Left ventricle myocardium superior (tissue), 1 donor: ENCODE measurements at regions of chr6 and their contacts with region 1.

Region 1: DNA sequence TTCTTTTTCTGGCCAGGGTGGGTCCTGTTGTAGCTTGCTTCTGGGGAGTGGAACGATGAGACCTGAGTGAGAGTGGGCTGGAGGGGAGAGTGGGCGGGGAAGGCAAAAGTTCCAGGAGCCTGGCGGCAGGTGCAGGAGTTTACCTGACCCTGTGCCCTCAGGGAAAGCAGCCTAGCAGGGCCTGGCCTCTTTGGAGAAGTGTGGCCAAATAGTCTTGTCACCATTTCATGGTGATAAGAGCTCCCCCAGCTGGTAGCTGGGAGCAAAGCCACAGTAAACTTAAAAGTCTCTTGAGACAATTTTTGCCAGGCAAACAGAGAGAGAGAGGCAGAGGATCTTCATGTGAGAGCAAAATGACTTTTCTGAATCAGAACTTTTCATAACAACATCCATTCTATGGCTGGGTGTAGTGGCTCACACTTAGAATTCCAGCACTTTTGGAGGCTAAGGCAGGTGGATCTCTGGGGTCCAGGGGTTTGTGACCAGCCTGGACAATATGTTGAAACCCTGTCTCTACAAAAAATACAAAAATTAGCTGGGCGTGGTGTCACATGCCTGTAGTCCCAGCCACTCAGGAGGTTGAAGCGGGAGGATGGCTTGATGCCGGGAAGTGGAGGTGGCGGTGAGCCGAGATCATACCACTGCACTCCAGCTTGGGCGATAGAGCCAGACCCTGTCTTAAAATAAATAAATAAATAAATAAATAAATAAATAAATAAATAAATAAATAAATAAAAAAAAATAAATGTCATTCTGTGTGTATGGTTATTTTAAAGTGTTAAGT is 161.8 kb upstream of the SCGN start:
- DNase-seq: peak; percentile 65
- ATAC-seq: peak; percentile 84

Region 2: DNA sequence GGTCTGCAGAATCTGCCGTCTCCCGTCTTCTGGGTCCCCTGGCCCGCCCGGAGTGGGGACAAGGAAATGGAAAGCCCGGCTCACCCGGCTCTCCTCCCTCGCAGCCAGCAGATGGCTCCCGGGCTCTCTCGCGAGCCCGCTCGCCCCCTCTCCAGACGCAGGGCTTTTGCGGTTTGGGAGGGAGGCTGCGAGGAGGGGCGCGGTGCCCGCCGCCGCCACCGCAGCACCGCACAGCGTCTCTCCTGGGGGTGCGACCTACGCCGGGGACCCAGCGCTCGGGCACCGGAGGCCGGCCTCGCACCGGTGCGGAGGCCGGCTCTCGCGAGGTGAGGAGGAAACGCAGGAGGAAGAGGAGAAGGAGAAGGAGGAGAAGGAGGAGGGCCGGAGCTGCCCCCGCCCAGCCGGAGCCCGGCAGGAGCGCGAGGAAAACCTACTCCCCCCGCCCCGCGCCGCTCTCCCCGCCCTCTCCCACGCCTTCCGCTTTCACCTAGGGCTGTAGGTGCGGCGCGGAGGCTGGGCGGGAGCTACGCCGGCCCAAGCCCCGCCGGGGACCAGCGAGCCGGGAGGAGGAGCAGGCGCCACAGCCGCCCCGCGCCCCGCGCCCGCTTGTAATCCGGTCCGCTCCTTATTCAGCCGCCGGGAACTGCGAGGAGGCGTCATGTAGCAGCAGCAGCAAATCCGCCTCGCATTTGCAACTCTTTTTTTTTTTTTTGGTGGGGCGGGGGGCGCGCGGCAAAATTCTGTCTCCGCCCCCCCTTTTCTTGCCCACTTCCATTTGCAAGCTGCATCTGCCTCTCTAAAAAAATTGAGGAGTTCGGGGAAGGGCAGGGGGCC is 211.1 kb before region 1 on chr6 and contains the start of gene CARMIL1:
- intact Hi-C with region 1: loop called (anchors 5 kb)
- DNase-seq: peak; percentile 88
- ATAC-seq: peak; percentile 94
- total RNA-seq, gene CARMIL1: 4.7 TPM